ENCODE measurements at regions of chr9 and their contacts with region 1.

Region 1: DNA sequence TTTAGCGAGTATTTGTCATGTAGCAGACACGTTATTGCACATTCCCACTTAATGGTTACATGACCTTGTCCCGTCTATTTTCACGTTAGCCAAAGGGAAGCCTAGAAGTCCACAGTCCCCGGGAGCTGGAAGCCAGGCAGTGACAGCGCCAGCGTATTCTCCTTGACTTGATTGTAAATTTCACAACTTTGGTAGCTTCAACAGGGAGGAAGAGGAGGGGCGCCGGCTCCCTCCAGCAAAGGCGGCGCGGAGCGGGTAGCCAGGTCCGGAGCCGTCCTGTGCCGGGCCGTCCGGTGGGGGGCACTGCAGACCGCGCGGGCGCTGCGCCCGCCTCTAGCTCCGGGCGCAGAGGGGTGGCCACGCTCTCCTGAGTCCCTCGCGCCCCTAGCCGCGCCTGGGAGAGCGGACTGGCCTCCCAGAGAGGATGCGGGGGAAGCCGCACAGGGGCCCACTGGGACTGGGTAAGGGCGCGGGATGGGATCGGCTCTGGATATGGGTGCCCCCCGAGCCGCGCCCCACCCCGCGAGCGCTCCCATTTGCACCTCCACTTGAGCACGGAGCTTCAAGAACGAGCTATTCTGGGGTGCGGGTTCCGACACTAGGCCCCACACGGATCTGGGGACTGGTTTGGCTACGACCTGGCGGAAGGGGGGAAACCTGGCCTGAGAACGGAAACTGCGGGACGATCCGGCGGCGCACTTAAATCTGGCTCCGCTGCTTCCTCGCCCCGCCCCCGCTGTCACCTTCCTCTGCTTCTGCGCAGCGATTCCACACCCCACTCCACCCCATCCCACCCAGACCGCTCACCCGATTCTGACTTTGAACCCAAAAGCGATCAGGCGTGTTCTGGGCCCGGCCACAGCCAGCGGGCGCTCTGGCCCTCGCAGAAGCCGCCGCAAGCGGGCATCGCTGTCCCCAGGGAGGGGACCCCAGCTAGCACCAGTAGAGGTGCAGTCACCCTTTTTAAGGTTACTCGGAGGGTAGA is 23.8 kb downstream of the KLF4 start:
- DNase-seq: peak; percentile 64 to 86
- H3K4me3 ChIP-seq: peak overlapping the region; percentile 36
- H3K4me1 ChIP-seq: peaks cover 6% of the 10 kb centered on the region
- H3K27me3 ChIP-seq: no peaks in the 10 kb centered on the region

Region 2: GRCh38 chr9:108565651-108566378 is 1100.1 kb after region 1 on chr9:
- in situ Hi-C with region 1: loop called (anchors 10 kb)
- DNase-seq: peak; percentile 64 to 67
- H3K4me3 ChIP-seq: no peak overlapping the region
- H3K4me1 ChIP-seq: no peaks in the 10 kb centered on the region
- H3K27me3 ChIP-seq: no peaks in the 10 kb centered on the region

Measured in HAP-1 (cell line).